ENCODE measurements at regions of chr3 and their contacts with region 1.

Region 1: GRCh38 chr3:58837856-58838255 is 171.3 kb upstream of the FAM3D start:
- DNase-seq: no peak
- H3K4me3 ChIP-seq: no peak overlapping the region
- H3K27ac ChIP-seq: no peak overlapping the region
- H3K4me1 ChIP-seq: no peaks in the 10 kb centered on the region
- H3K27me3 ChIP-seq: no peaks in the 10 kb centered on the region
- CTCF ChIP-seq: no peak
- EP300 ChIP-seq: no peak
- POLR2A ChIP-seq: no peak
- RAD21 ChIP-seq: no peak

Region 2: DNA sequence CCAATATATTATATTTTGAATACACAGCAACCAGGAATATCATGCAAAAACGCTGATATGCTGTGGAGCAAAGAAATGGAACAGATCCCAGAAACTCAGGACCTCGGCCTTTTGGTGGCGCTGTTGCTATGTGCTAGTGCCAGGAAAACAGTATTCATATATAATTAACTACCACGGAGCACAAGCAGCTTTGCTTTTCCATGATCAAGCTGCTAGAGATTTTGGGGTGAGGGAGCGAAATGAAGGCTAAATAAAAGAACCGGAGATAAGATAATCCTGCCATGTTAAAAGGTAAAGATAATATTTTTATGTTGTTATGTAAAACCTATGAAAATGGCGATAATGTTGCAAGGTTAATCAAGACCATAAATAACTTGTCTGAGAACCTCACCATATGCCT is 13.6 kb before region 1 on chr3:
- CTCF ChIA-PET with region 1: interaction called, 12 read pairs
- POLR2A ChIA-PET with region 1: interaction called, 3 read pairs
- DNase-seq: peak; percentile 27 to 79
- H3K4me3 ChIP-seq: no peak overlapping the region
- H3K27ac ChIP-seq: no peak overlapping the region
- H3K4me1 ChIP-seq: no peaks in the 10 kb centered on the region
- H3K27me3 ChIP-seq: no peaks in the 10 kb centered on the region
- CTCF ChIP-seq: peak; percentile 35 to 84 (median 80)
- EP300 ChIP-seq: no peak
- POLR2A ChIP-seq: no peak
- RAD21 ChIP-seq: peak; percentile 90 to 92

Region 3: GRCh38 chr3:58848826-58849225 is 11.0 kb after region 1 on chr3:
- CTCF ChIA-PET with region 1: no interaction called
- POLR2A ChIA-PET with region 1: no interaction called
- DNase-seq: no peak
- H3K4me3 ChIP-seq: no peak overlapping the region
- H3K27ac ChIP-seq: no peak overlapping the region
- H3K4me1 ChIP-seq: no peaks in the 10 kb centered on the region
- H3K27me3 ChIP-seq: no peaks in the 10 kb centered on the region
- CTCF ChIP-seq: no peak
- EP300 ChIP-seq: no peak
- POLR2A ChIP-seq: no peak
- RAD21 ChIP-seq: no peak

Region 4: DNA sequence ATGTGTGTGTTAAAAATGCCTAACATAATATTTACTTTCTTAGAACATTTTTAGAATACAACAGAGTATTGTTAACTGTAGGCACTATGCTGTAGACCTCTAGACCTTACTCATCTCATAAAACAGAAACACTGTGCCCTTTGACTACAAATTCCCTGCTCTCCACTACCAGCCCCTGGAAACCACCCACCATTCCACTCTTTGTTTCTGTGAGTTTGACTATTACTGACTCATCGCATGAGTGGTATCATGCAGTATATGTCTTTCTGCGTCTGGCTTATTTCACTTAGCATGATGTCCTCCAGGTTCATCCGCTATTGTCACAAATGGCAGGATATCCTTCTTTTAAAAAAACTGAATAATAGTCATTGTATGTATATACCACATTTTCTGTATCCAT is 428.7 kb after region 1 on chr3:
- CTCF ChIA-PET with region 1: no interaction called
- POLR2A ChIA-PET with region 1: no interaction called
- DNase-seq: no peak
- H3K4me3 ChIP-seq: no peak overlapping the region
- H3K27ac ChIP-seq: no peak overlapping the region
- H3K4me1 ChIP-seq: no peaks in the 10 kb centered on the region
- H3K27me3 ChIP-seq: no peaks in the 10 kb centered on the region
- CTCF ChIP-seq: no peak
- EP300 ChIP-seq: no peak
- POLR2A ChIP-seq: no peak
- RAD21 ChIP-seq: no peak

Measured in H1 (cell line).